CD4-positive, alpha-beta memory T cell (primary cell): ENCODE measurements at regions of chr17 and their contacts with region 1.

Region 1: GRCh38 chr17:20234276-20234675 is 225.1 kb downstream of the SPECC1 start:
- DNase-seq: peak; percentile 50 to 56 (median 54)
- H3K4me3 ChIP-seq: no peak overlapping the region
- H3K4me3 Mint-ChIP-seq: peak overlapping the region; percentile 54 to 87 (median 68)
- H3K27ac ChIP-seq: no peak overlapping the region
- H3K27ac Mint-ChIP-seq: peak overlapping the region; percentile 18 to 88 (median 83)
- H3K4me1 ChIP-seq: peaks cover 19% of the 10 kb centered on the region
- H3K4me1 Mint-ChIP-seq: peaks cover 14 to 34% (median 25%) of the 10 kb centered on the region in 4 donors
- H3K27me3 ChIP-seq: no peaks in the 10 kb centered on the region
- H3K27me3 Mint-ChIP-seq: no peaks in the 10 kb centered on the region

Region 2: DNA sequence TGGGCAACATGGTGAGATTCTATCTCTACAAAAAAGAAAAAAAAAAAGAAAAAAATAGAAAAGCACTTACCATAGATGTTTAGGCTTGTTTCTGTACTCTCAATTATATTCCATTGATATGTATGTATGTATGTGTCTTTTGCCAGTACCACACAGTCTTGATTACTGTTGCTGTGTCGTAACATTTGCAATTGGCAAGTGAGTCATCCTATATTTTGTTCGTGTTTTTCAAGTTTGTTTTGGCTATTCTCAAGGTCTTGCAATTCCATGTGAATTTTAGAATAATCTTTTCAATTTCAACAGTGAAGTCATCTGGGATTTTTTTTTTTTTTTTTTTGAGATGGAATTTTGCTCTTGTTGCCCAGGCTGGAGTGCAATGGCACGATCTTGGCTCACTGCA is 205.8 kb before region 1 on chr17:
- CTCF ChIA-PET with region 1: no interaction called
- POLR2A ChIA-PET with region 1: no interaction called
- intact Hi-C with region 1: no loop called
- DNase-seq: no peak
- H3K4me3 ChIP-seq: no peak overlapping the region
- H3K4me3 Mint-ChIP-seq: no peak overlapping the region
- H3K27ac ChIP-seq: no peak overlapping the region
- H3K27ac Mint-ChIP-seq: no peak overlapping the region
- H3K4me1 ChIP-seq: no peaks in the 10 kb centered on the region
- H3K4me1 Mint-ChIP-seq: peaks cover 0 to 1% (median 0%) of the 10 kb centered on the region in 4 donors
- H3K27me3 ChIP-seq: no peaks in the 10 kb centered on the region
- H3K27me3 Mint-ChIP-seq: peaks cover 0 to 6% of the 10 kb centered on the region in 2 donors

Region 3: GRCh38 chr17:20191056-20191455 is 43.2 kb before region 1 on chr17:
- CTCF ChIA-PET with region 1: no interaction called
- POLR2A ChIA-PET with region 1: no interaction called
- intact Hi-C with region 1: no loop called
- DNase-seq: no peak
- H3K4me3 ChIP-seq: no peak overlapping the region
- H3K4me3 Mint-ChIP-seq: no peak overlapping the region
- H3K27ac ChIP-seq: no peak overlapping the region
- H3K27ac Mint-ChIP-seq: no peak overlapping the region
- H3K4me1 ChIP-seq: no peaks in the 10 kb centered on the region
- H3K4me1 Mint-ChIP-seq: peaks cover 0 to 3% (median 0%) of the 10 kb centered on the region in 4 donors
- H3K27me3 ChIP-seq: no peaks in the 10 kb centered on the region
- H3K27me3 Mint-ChIP-seq: peaks cover 0 to 2% of the 10 kb centered on the region in 2 donors

Region 4: GRCh38 chr17:20206068-20206467 is 28.2 kb before region 1 on chr17:
- CTCF ChIA-PET with region 1: no interaction called
- POLR2A ChIA-PET with region 1: no interaction called
- intact Hi-C with region 1: no loop called
- DNase-seq: peak in 1 of 5 donors; percentile 3
- H3K4me3 ChIP-seq: no peak overlapping the region
- H3K4me3 Mint-ChIP-seq: peak overlapping the region in 1 of 8 donors; percentile 36
- H3K27ac ChIP-seq: no peak overlapping the region
- H3K27ac Mint-ChIP-seq: peak overlapping the region in 1 of 7 donors; percentile 21
- H3K4me1 ChIP-seq: no peaks in the 10 kb centered on the region
- H3K4me1 Mint-ChIP-seq: peaks cover 4 to 17% (median 9%) of the 10 kb centered on the region in 4 donors
- H3K27me3 ChIP-seq: no peaks in the 10 kb centered on the region
- H3K27me3 Mint-ChIP-seq: no peaks in the 10 kb centered on the region

Region 5: DNA sequence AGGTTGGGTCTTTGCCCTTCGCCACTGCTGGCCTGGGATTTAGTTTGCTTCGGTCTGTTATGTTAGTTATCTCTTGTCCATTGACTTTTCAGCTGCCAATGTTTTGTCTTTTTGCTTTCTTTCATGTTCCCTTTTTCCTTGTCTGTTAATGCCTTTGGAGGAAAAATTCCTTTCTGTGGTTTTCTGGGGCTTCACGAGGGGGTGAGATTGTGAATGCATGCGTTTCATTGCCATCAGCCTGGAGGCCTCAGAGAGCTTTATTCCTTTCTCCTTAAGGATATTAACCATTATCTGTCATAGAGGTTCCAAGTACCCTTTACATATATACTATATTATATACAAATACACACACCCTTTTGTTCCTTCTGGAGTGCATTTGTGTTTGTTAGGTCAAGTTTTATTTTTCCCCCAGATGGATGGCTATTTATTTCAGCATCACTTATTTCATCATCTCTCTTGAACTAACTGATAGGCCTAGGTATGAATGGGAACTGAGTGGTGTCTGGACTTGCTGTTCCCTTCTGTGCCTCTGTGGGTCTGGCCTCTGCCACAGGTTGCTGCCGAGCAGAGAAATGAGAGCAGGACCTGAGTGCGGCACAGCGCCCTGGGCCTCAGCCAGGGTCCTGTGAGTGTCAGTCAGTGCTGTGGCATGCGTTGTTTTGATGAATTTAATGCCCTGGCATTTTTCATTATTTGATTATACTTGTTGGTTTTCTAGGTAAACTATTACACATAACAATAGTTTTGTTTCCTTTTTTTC is 39.6 kb after region 1 on chr17:
- CTCF ChIA-PET with region 1: interaction called, 10 read pairs
- POLR2A ChIA-PET with region 1: interaction called, 3 read pairs
- intact Hi-C with region 1: loop called (anchors 5 kb)
- DNase-seq: no peak
- H3K4me3 ChIP-seq: no peak overlapping the region
- H3K4me3 Mint-ChIP-seq: peak overlapping the region in 7 of 8 donors; percentile 36 to 84 (median 70)
- H3K27ac ChIP-seq: no peak overlapping the region
- H3K27ac Mint-ChIP-seq: peak overlapping the region; percentile 42 to 90 (median 72)
- H3K4me1 ChIP-seq: peaks cover 85% of the 10 kb centered on the region
- H3K4me1 Mint-ChIP-seq: peaks cover 48 to 80% (median 67%) of the 10 kb centered on the region in 4 donors
- H3K27me3 ChIP-seq: no peaks in the 10 kb centered on the region
- H3K27me3 Mint-ChIP-seq: no peaks in the 10 kb centered on the region

Region 6: DNA sequence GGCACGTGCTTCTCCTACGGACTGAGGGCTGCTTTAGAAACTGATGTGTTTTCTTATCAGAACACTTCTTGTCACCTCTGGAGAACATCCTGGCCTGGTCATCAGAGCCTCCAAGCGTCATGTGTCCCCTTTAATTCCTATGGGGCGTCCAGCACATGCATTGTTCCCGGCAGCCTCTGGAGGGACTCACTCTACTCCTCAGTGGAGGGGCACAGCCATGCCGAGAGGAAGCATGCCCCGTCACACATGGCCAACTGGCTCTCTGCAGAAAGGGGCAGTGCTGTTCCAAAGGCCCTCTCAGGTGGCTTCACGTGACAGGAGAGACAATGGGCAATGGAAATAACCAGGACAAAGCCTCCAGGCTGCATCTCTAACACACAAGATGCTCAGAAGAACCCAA is 377.0 kb after region 1 on chr17:
- CTCF ChIA-PET with region 1: no interaction called
- POLR2A ChIA-PET with region 1: no interaction called
- intact Hi-C with region 1: no loop called
- DNase-seq: no peak
- H3K4me3 ChIP-seq: no peak overlapping the region
- H3K4me3 Mint-ChIP-seq: no peak overlapping the region
- H3K27ac ChIP-seq: no peak overlapping the region
- H3K27ac Mint-ChIP-seq: no peak overlapping the region
- H3K4me1 ChIP-seq: no peaks in the 10 kb centered on the region
- H3K4me1 Mint-ChIP-seq: no peaks in the 10 kb centered on the region
- H3K27me3 ChIP-seq: no peaks in the 10 kb centered on the region
- H3K27me3 Mint-ChIP-seq: no peaks in the 10 kb centered on the region